Cardiac septum (tissue), 1 donor: ENCODE measurements at regions of chr21 and their contacts with region 1.

Region 1: DNA sequence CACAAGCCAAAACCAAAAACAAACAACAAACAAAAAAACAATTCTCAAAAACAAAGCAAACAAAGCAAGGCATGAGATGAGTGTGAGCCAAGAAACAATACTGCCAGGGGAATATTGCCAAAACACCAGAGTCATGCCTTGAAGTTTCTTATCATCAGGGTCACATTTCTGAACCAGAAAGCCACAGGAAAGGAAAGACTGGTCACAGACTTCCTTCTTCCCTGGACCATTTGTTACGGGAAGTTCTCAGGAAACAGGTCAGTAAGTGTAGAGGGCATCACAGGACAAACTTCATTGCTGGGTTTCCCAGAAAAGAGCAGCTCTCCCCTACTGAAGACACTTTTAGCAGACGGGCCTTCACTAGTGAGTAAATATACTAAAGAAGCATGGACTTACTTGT is 191.2 kb downstream of the GABPA start:
- DNase-seq: no peak

Region 2: DNA sequence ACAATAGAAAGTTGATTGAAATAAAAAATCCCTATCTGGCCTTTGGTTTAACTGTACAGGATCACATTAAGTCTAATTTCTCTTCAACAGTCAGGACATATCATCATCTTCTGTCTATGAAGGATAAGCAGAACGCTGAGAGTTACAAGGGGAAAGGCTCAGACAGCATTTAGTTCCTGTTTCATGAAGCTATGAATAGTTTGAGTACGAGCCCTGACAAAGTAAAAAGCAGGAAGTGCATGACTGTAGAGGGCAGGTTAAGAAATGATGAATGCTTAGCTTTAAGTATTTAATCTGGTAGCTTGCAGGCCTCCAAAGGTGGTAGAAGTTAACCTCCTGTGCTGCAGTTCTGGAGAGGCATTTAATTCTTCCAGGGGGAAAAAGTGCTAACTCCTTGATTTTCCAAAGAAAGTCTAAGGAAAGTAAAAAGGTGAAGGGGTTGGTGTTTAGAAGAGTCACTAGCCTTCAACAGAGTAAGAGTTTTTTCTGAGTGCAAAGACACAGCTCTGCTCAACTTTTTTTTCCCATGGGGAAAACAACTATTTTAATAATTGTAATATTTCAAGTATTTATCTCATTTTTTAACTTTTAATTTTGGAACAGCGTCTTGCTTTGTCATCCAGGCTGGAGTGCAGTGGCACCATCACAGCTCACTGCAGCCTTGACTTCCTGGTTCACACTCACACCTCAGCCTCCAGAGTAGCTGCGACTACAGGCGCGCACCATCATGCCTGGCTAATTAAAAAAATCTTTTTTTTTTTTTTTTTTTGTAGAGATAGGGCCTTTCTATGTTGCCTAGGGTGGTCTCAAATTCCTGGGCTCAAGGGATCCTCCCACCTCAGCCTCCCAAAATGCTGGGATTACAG is 41.9 kb after region 1 on chr21:
- intact Hi-C with region 1: loop called (anchors 5 kb)
- DNase-seq: no peak